Activated CD4-positive, alpha-beta memory T cell treated with anti-CD3 and anti-CD28 coated beads for 36 hours (primary cell): ENCODE measurements at regions of chr2 and their contacts with region 1.

Region 1: DNA sequence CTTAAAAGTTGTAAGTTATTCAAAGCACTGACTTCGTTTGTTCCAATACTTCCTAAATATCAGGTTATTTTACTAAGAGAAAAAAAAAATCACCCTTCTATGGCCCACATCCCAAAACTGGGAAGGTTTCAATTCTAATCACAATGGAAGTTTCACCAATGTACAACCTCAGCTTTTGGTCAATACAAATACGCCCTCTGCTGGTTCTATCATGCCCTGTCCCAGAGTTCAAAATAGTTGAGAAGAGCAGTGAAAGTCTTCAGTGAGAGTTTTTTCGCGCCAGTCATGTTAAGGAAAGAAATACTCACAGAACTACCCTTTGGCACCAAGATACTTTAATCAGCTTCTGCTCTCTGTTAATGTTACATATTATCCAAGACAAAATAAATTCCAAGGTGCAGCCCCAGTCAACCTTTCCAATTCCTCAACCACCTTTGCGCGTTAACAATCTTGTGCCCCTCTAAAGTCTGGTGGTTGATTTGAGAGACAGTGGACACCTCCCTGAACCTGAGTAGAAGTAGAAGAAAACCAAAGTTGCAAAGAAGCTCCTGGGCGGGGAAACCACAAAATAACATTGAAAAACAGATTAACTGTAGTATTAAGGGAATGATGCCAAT is 59.9 kb downstream of the SUMO1 start:
- DNase-seq: peak; percentile 60
- H3K4me3 Mint-ChIP-seq: no peak overlapping the region
- H3K27ac Mint-ChIP-seq: no peak overlapping the region
- H3K4me1 Mint-ChIP-seq: no peaks in the 10 kb centered on the region
- H3K27me3 Mint-ChIP-seq: no peaks in the 10 kb centered on the region

Region 2: DNA sequence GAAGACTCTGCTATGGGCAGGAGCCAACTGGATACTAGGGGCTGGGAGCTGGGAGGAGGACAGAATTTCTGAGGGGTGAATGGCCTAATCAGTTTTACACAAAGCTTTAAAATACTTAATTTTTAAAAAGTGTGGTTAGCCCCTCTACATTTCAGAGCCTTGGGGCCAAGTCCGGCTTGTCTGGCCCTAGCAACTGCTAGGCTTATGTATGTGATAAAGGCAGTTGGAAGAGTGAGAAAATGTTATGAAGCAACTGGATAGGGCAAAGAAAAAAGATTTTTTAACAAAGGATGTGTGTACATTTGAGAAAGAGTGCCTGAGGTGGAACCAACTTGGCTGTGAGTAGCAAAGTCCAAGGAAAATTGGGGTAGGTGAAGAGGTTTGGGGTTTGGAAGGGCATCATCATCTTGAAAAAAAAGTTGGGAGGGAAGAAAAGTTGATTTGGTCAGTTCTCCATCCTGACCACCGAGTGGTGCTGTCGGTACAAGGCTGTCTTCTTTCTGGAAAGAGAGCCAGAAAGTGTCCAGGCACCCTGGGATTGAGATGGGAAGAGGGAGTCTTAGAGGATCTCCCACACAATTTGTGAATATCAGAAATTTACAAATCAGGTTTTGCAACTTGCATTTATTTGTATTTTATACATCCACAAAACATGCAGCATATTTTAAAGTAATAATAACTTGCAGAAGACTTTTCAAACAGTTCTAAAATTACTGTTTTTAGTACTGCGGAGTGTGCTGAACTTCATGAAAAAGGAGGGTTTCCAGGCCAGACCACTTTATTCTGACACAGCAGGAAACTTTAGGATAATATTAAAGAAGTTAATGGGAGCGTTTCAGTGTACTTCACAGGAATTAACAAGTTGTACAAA is 382.6 kb before region 1 on chr2:
- CTCF ChIA-PET with region 1: interaction called, 3 read pairs
- POLR2A ChIA-PET with region 1: no interaction called
- intact Hi-C with region 1: loop called (anchors 1 kb)
- DNase-seq: peak; percentile 11
- H3K4me3 Mint-ChIP-seq: no peak overlapping the region
- H3K27ac Mint-ChIP-seq: no peak overlapping the region
- H3K4me1 Mint-ChIP-seq: no peaks in the 10 kb centered on the region
- H3K27me3 Mint-ChIP-seq: peaks cover 5% of the 10 kb centered on the region

Region 3: GRCh38 chr2:201860636-201861066 is 317.8 kb before region 1 on chr2:
- CTCF ChIA-PET with region 1: interaction called, 113 read pairs
- POLR2A ChIA-PET with region 1: no interaction called
- intact Hi-C with region 1: loop called (anchors 1 kb)
- DNase-seq: peak; percentile 45
- H3K4me3 Mint-ChIP-seq: no peak overlapping the region
- H3K27ac Mint-ChIP-seq: no peak overlapping the region
- H3K4me1 Mint-ChIP-seq: peaks cover 15% of the 10 kb centered on the region
- H3K27me3 Mint-ChIP-seq: peaks cover 18% of the 10 kb centered on the region

Region 4: DNA sequence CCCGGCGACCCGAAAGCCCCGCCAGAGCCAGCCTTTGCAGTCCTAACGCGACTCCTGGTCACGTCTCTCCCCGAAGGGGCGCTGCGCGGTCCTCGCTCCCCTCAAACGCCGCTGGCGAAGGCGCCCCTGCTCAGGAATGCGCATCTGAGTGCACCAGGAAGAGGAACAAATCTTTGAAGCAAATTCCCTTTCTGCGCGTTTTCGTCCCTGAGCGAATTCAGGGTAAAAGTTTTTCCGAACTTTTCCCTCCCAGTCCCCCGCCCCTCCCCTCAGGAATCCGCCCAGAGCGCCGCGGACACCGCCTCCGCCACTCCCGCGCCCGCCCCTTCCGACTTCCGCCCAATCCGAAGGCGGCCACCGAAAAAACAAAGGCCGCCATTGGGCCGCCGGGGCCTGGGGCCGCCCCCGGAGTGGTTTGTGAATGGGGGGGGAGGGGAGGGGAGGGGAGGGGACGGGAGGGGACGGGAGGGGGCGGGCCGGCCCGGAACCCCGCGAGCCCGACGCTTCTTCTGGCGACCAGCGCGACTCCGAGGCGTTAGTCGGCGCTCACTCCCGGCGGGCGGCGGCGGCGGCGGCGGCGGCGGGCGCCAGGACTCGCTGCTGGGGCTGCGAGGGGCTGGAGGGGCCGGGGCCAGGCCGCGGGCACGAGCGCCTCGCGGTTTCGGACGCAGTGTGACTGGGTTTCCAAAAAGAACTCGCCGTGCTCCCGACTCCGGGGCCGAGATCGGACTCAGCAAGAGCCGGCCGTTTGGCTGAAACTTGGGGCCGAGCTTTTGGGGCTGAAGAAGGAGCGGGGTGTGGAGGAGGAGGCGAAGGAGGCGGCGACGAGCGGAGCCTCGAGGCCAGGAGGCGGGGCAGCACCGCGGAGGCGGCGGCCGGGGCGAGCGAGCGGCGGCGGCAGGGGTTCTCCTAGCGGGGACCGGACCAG is 144.9 kb before region 1 on chr2 and contains the start of gene FZD7:
- CTCF ChIA-PET with region 1: interaction called, 3 read pairs
- POLR2A ChIA-PET with region 1: no interaction called
- intact Hi-C with region 1: loop called (anchors 2 kb)
- DNase-seq: peak; percentile 91
- H3K4me3 Mint-ChIP-seq: peak within 1 kb of the TSS; percentile 80
- H3K27ac Mint-ChIP-seq: no peak within 1 kb of the TSS
- H3K4me1 Mint-ChIP-seq: peaks cover 11% of the 10 kb centered on the region
- H3K27me3 Mint-ChIP-seq: peaks cover 19% of the 10 kb centered on the region
- total RNA-seq, gene FZD7: 0.58 to 0.62 TPM

Region 5: DNA sequence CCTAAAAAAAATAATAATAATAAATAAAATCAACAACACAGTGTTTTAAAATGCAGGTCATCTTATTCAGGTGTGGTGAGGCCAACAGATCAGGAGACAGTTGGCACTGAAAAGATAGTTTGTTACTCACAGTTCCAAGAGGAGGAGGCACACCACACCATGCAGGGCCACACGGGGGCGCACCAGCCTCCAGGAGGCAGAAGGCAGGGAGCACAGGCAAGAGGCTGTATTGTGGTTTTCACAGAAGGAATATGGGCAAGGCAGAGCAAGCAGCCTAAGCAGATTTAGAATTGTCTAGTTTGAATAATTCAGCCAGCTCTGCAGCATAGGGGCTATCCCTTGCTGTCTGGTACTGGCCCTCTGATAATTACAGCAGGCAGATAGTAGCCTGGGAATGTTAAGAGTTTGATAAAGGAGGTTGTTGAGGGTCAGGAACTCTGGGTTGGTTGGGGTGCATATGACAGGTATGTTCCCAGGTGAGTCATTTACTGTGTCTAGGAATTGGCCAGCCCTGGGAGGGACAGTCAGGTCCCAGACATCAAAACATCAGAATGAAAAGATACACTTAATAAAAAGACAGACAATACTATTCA is 74.1 kb before region 1 on chr2:
- CTCF ChIA-PET with region 1: interaction called, 19 read pairs
- POLR2A ChIA-PET with region 1: no interaction called
- intact Hi-C with region 1: loop called (anchors 1 kb)
- DNase-seq: peak; percentile 74
- H3K4me3 Mint-ChIP-seq: no peak overlapping the region
- H3K27ac Mint-ChIP-seq: no peak overlapping the region
- H3K4me1 Mint-ChIP-seq: no peaks in the 10 kb centered on the region
- H3K27me3 Mint-ChIP-seq: peaks cover 5% of the 10 kb centered on the region